IMR-90 (cell line): ENCODE measurements at regions of chr13 and their contacts with region 1.

Region 1: DNA sequence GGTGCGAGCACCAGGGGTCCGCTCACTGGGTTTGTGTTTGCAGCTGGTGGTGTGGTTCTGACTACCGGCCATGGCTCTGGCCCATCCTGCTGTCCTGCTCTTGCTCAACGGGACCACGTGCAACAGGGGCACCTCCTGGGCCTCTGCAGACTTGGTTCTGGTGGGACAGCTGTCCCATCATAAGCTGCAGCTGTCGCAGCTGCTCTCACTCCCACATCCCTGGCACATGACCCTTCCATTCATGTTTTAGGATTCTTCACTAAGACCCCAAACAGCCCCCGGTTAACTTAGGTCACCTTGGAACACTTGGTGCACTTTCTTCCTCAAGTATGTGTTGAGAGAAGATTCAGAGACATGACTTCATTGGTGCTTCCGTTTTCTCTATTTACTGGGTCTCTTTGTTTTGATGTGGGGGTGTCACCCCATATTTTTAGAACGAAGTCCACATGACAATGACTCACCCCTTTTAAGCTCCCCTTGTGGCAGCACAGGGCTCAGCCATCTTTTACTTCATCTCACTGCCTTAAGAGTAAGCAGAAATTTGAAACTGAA is 68.4 kb upstream of the ARHGEF7 start:
- DNase-seq: peak; percentile 58
- ATAC-seq: peak; percentile 60
- H3K4me3 ChIP-seq: no peak overlapping the region
- H3K27ac ChIP-seq: peak overlapping the region; percentile 66; the same call in 1 of the 2 replicates
- H3K4me1 ChIP-seq: peaks cover 10% of the 10 kb centered on the region
- H3K27me3 ChIP-seq: no peaks in the 10 kb centered on the region; the same call in 1 of the 2 replicates
- CTCF ChIP-seq: peak; percentile 37; the same call in 1 of the 2 replicates
- POLR2A ChIP-seq: no peak
- RAD21 ChIP-seq: peak; percentile 11; the same call in 1 of the 2 replicates

Region 2: GRCh38 chr13:110593430-110594130 is 453.1 kb before region 1 on chr13:
- CTCF ChIA-PET with region 1: no interaction called
- POLR2A ChIA-PET with region 1: no interaction called
- dilution Hi-C with region 1: no loop called
- in situ Hi-C with region 1: no loop called
- intact Hi-C with region 1: loop called (anchors 5 kb)
- DNase-seq: peak; percentile 57
- ATAC-seq: peak; percentile 81
- H3K4me3 ChIP-seq: no peak overlapping the region
- H3K27ac ChIP-seq: no peak overlapping the region
- H3K4me1 ChIP-seq: 0 out of 2 replicates have a peak, but pooled peaks cover 4% of the 10 kb centered on the region
- H3K27me3 ChIP-seq: peaks cover 2% of the 10 kb centered on the region; the same call in 1 of the 2 replicates
- CTCF ChIP-seq: peak; percentile 61
- POLR2A ChIP-seq: no peak
- RAD21 ChIP-seq: peak; percentile 66

Region 3: GRCh38 chr13:110634558-110634957 is 412.1 kb before region 1 on chr13:
- CTCF ChIA-PET with region 1: no interaction called
- POLR2A ChIA-PET with region 1: no interaction called
- dilution Hi-C with region 1: no loop called
- in situ Hi-C with region 1: no loop called
- intact Hi-C with region 1: no loop called
- DNase-seq: peak; percentile 89
- ATAC-seq: peak; percentile 85
- H3K4me3 ChIP-seq: no peak overlapping the region
- H3K27ac ChIP-seq: peak overlapping the region; percentile 16; the same call in 1 of the 2 replicates
- H3K4me1 ChIP-seq: peaks cover 5% of the 10 kb centered on the region; the same call in 1 of the 2 replicates
- H3K27me3 ChIP-seq: no peaks in the 10 kb centered on the region
- CTCF ChIP-seq: no peak
- POLR2A ChIP-seq: no peak
- RAD21 ChIP-seq: no peak

Region 4: GRCh38 chr13:110819203-110820014 is 227.3 kb before region 1 on chr13:
- CTCF ChIA-PET with region 1: no interaction called
- POLR2A ChIA-PET with region 1: no interaction called
- dilution Hi-C with region 1: no loop called
- in situ Hi-C with region 1: no loop called
- intact Hi-C with region 1: loop called (anchors 5 kb)
- DNase-seq: peak; percentile 58
- ATAC-seq: peak; percentile 99
- H3K4me3 ChIP-seq: no peak overlapping the region
- H3K27ac ChIP-seq: no peak overlapping the region
- H3K4me1 ChIP-seq: peaks cover 2% of the 10 kb centered on the region; the same call in 1 of the 2 replicates
- H3K27me3 ChIP-seq: peaks cover 2% of the 10 kb centered on the region; the same call in 1 of the 2 replicates
- CTCF ChIP-seq: peak; percentile 94
- POLR2A ChIP-seq: peak; percentile 28; the same call in 1 of the 2 replicates
- RAD21 ChIP-seq: peak; percentile 95

Region 5: DNA sequence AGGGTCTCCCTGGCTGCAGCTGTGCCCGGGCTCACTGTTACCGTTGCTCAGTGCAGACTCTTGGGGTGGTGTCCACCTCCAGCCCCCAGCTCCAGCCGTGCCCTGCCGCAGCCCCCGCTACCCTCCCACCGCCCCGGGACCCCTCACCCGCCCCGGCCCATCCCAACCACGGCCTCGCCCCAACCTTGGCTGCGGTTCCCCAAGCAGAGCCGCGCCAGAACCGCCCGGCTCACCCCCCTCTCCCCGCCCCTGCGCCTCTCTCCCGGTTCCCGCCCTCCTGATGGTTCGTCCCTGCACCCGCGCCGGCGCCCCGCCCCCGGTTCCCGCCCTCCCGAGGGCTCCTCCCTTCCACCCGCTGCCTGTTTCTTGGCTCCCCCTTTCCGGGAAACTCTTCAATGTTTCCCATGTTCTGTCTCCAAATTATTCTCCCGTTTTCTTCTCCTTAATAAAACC is 172.1 kb before region 1 on chr13:
- CTCF ChIA-PET with region 1: no interaction called
- POLR2A ChIA-PET with region 1: no interaction called
- dilution Hi-C with region 1: no loop called
- in situ Hi-C with region 1: no loop called
- intact Hi-C with region 1: loop called (anchors 5 kb)
- DNase-seq: peak; percentile 46
- ATAC-seq: peak; percentile 80
- H3K4me3 ChIP-seq: peak overlapping the region; percentile 25
- H3K27ac ChIP-seq: no peak overlapping the region
- H3K4me1 ChIP-seq: peaks cover 7% of the 10 kb centered on the region; the same call in 1 of the 2 replicates
- H3K27me3 ChIP-seq: no peaks in the 10 kb centered on the region
- CTCF ChIP-seq: no peak
- POLR2A ChIP-seq: no peak
- RAD21 ChIP-seq: no peak

Region 6: GRCh38 chr13:110925023-110925612 is 121.5 kb before region 1 on chr13:
- CTCF ChIA-PET with region 1: no interaction called
- POLR2A ChIA-PET with region 1: no interaction called
- dilution Hi-C with region 1: no loop called
- in situ Hi-C with region 1: loop called (anchors 10 kb)
- intact Hi-C with region 1: no loop called
- DNase-seq: no peak
- ATAC-seq: no peak
- H3K4me3 ChIP-seq: no peak overlapping the region
- H3K27ac ChIP-seq: no peak overlapping the region
- H3K4me1 ChIP-seq: peaks cover 2% of the 10 kb centered on the region; the same call in 1 of the 2 replicates
- H3K27me3 ChIP-seq: peaks cover 10% of the 10 kb centered on the region
- CTCF ChIP-seq: peak; percentile 25; the same call in 1 of the 2 replicates
- POLR2A ChIP-seq: no peak
- RAD21 ChIP-seq: peak; percentile 31

Region 7: GRCh38 chr13:110944121-110944967 is 102.3 kb before region 1 on chr13:
- CTCF ChIA-PET with region 1: interaction called, 3 read pairs
- POLR2A ChIA-PET with region 1: no interaction called
- dilution Hi-C with region 1: no loop called
- in situ Hi-C with region 1: loop called (anchors 10 kb)
- intact Hi-C with region 1: loop called (anchors 1 kb)
- DNase-seq: peak; percentile 69
- ATAC-seq: peak; percentile 90
- H3K4me3 ChIP-seq: no peak overlapping the region
- H3K27ac ChIP-seq: no peak overlapping the region
- H3K4me1 ChIP-seq: no peaks in the 10 kb centered on the region
- H3K27me3 ChIP-seq: no peaks in the 10 kb centered on the region
- CTCF ChIP-seq: peak; percentile 71
- POLR2A ChIP-seq: no peak
- RAD21 ChIP-seq: peak; percentile 79